ENCODE measurements at regions of chr11 and their contacts with region 1.

Region 1: GRCh38 chr11:43680521-43681400 is at the start of gene HSD17B12:
- DNase-seq: peak; percentile 99
- H3K4me3 Mint-ChIP-seq: peak within 1 kb of the TSS; percentile 99
- H3K27ac Mint-ChIP-seq: peak within 1 kb of the TSS; percentile 94
- H3K4me1 Mint-ChIP-seq: peaks cover 40% of the 10 kb centered on the region
- H3K27me3 Mint-ChIP-seq: peaks cover 9% of the 10 kb centered on the region
- total RNA-seq, gene HSD17B12: 72.3 and 77.8 TPM in 2 replicates

Region 2: DNA sequence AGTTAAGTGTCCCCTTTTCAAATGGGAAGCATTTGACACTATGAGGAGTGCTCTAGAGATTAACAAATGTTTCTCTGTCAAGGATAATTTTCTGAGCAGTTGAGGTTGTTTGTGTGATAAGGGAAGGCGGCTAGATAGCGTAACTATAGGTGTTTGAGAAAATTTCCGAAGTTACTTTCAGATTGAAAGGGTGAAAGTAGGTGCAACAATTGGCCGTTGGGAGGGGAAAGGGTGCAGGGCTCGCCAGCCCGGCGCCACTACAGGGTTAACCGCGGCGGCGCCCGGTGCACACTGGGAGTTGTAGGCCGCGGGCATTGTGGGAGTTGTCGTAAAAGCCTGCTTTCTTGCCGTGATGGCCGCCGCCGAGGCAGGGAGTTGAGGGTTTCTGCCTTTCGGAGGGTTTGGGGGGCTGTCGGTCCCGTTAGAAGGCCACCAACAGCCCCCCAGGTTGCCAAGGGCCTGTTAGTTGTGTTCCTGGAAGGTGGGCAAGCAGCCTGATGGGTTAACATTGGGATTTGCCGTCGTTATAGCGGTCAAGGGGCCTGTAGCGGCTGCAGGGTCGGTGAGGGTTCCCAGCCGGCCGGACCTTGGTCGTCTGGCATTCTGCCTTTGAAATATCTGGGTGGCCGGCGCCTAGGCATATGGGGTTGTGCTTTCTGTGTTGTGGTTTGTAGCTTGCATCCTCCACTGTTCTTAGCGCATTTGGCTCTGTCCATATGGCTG is 36.7 kb before region 1 on chr11:
- intact Hi-C with region 1: loop called (anchors 1 kb)
- DNase-seq: peak; percentile 83
- H3K4me3 Mint-ChIP-seq: peak overlapping the region; percentile 99
- H3K27ac Mint-ChIP-seq: peak overlapping the region; percentile 91
- H3K4me1 Mint-ChIP-seq: peaks cover 19% of the 10 kb centered on the region
- H3K27me3 Mint-ChIP-seq: peaks cover 18% of the 10 kb centered on the region

Region 3: GRCh38 chr11:43852057-43852636 is 171.4 kb after region 1 on chr11:
- intact Hi-C with region 1: loop called (anchors 1 kb)
- DNase-seq: peak; percentile 33
- H3K4me3 Mint-ChIP-seq: no peak overlapping the region
- H3K27ac Mint-ChIP-seq: no peak overlapping the region
- H3K4me1 Mint-ChIP-seq: no peaks in the 10 kb centered on the region
- H3K27me3 Mint-ChIP-seq: no peaks in the 10 kb centered on the region

Region 4: GRCh38 chr11:43880640-43881159 is 199.9 kb after region 1 on chr11 and contains the start of gene ALKBH3:
- intact Hi-C with region 1: loop called (anchors 5 kb)
- DNase-seq: peak; percentile 84
- H3K4me3 Mint-ChIP-seq: peak within 1 kb of the TSS; percentile 93
- H3K27ac Mint-ChIP-seq: peak within 1 kb of the TSS; percentile 62
- H3K4me1 Mint-ChIP-seq: peaks cover 20% of the 10 kb centered on the region
- H3K27me3 Mint-ChIP-seq: peaks cover 10% of the 10 kb centered on the region
- total RNA-seq, gene ALKBH3: 32.7 and 38.1 TPM in 2 replicates

Region 5: DNA sequence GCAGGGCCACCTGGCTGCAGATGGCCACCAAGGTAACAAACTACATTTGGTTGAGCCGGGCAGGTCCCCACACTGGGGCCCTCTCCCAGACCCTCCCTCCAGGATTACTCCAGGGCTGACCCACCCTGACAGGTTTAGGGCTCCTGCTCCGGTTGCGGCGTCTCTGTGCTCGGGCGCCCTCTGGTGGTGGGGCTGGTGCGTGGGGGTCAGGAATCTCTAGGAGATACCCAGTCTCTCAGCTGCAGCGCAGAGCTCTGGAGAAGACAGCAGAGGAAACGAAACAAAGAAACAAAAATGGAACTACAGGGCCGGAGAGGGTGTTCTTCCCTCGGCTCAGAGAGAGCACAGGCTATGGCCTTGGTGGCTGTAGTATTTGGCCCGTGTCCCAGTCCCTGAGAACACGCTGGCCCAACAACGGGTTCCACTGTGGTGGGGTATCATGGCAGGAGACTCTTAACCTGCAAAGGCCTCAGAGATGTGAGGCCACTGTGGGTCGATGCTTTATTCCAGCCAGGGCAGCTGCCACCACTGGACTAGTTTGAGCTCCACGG is 264.1 kb after region 1 on chr11:
- intact Hi-C with region 1: loop called (anchors 5 kb)
- DNase-seq: peak; percentile 56
- H3K4me3 Mint-ChIP-seq: peak overlapping the region; percentile 86
- H3K27ac Mint-ChIP-seq: peak overlapping the region; percentile 40
- H3K4me1 Mint-ChIP-seq: peaks cover 24% of the 10 kb centered on the region
- H3K27me3 Mint-ChIP-seq: peaks cover 62% of the 10 kb centered on the region

Region 6: DNA sequence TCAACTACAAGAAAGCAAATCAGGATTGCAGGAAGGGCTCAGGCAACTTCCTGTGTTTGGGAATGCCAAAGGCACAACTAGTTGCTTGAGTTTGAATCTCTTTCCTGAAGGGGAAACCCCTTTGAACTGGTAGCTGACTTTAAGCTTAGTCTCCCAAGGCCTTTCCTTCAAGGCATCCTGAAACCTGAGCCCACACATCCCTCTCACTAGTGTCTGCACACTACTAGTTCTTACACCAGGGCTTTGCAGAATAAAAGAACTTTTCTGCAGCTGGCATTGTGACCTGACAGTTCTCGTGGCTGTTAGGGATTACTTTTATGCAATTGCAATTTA is 510.1 kb after region 1 on chr11:
- intact Hi-C with region 1: no loop called
- DNase-seq: no peak
- H3K4me3 Mint-ChIP-seq: no peak overlapping the region
- H3K27ac Mint-ChIP-seq: no peak overlapping the region
- H3K4me1 Mint-ChIP-seq: peaks cover 15% of the 10 kb centered on the region
- H3K27me3 Mint-ChIP-seq: no peaks in the 10 kb centered on the region

Region 7: DNA sequence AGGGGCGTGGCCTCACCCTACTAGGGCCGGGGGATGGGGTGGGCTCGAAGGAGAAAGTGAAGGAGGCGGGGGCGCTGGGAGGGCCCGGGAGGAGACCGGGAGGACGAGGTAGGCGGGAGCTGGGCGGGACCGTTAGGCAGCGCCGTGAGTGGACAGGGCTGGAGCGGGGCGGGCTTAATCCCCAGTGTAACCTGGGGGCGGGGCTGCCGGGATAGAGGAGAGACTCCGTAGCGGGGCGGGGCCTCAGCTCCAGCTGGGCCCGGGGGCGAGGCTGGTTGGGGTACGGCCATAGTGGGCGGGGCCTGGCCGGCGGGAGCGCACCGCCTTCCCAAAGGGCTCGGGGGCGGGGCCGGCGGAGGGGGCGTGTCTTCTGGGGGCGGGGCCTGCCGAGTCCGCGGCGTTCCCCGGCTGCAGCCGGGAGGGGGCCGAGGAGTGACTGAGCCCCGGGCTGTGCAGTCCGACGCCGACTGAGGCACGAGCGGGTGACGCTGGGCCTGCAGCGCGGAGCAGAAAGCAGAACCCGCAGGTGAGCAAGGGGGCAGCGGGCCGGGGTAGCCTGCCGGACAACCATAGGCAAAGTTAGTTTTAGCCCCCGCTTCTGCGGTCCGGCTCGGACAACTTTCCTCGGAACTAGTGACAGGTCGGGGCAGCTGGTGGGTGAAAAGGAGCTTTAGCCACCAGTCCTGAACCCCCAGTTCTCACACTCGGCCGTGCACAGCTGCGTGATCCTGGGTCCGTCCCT is 884.6 kb after region 1 on chr11 and contains the start of gene CD82:
- intact Hi-C with region 1: loop called (anchors 2 kb)
- DNase-seq: peak; percentile 98
- H3K4me3 Mint-ChIP-seq: peak within 1 kb of the TSS; percentile 92
- H3K27ac Mint-ChIP-seq: peak within 1 kb of the TSS; percentile 92
- H3K4me1 Mint-ChIP-seq: peaks cover 66% of the 10 kb centered on the region
- H3K27me3 Mint-ChIP-seq: no peaks in the 10 kb centered on the region
- total RNA-seq, gene CD82: 499 and 500 TPM in 2 replicates